H1 (cell line): ENCODE measurements at regions of chr1 and their contacts with region 1.

Region 1: DNA sequence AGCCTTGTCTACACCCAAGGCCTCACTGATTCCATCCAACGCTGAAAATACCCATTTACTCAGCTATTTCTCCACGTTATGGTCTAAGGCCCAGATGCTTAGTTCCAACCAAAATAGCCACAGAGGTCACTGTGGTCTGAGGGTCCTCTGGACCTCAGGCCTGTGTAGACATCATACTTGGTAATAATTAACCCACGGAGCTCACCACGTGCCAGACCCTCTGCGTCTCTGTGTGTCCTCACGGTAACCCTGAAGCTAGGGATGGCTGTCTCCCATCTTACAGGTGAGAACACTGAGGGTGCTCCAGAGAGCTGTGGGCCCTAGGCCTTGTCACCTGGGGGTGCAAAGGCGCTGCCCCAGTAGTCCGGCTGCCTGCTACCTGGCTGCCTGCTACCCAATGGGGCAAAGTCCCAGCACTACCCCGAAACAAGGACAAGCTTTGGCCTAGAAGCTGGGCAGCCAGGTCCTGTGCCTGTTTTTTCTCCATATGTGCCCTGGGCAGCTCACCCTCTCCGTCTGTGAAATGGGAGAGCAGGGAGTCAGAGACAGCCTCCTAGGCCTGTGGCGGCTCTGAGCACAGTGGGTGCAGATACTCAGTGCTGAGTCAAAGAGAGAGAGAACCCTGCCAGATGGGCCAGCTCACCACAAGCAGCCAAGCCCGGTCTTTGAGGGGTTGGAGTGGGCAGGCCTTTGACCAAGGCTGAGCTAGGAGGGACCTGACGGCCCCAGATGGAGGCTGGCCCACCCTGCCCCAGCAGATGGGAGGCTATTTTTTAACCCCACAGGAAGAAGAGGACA is 17.0 kb upstream of the RUNX3 start:
- DNase-seq: no peak
- H3K4me3 ChIP-seq: no peak overlapping the region
- H3K27ac ChIP-seq: no peak overlapping the region
- H3K4me1 ChIP-seq: peaks cover 0 to 18% (median 9%) of the 10 kb centered on the region in 4 experiments; a peak in 5 of 7 replicates
- H3K27me3 ChIP-seq: no peaks in the 10 kb centered on the region
- CTCF ChIP-seq: no peak
- EP300 ChIP-seq: no peak
- POLR2A ChIP-seq: no peak
- RAD21 ChIP-seq: no peak

Region 2: GRCh38 chr1:24935615-24936484 is 11.2 kb before region 1 on chr1:
- CTCF ChIA-PET with region 1: interaction called, 19 read pairs
- POLR2A ChIA-PET with region 1: interaction called, 3 read pairs
- DNase-seq: no peak
- H3K4me3 ChIP-seq: peak overlapping the region in 1 of 4 experiments; percentile 44; a peak in 1 of 8 replicates
- H3K27ac ChIP-seq: no peak overlapping the region
- H3K4me1 ChIP-seq: peaks cover 2 to 49% (median 24%) of the 10 kb centered on the region in 4 experiments
- H3K27me3 ChIP-seq: peaks cover 27 to 52% (median 50%) of the 10 kb centered on the region in 4 experiments
- CTCF ChIP-seq: no peak
- EP300 ChIP-seq: no peak
- POLR2A ChIP-seq: no peak
- RAD21 ChIP-seq: no peak